ENCODE measurements at regions of chr14 and their contacts with region 1.

Region 1: DNA sequence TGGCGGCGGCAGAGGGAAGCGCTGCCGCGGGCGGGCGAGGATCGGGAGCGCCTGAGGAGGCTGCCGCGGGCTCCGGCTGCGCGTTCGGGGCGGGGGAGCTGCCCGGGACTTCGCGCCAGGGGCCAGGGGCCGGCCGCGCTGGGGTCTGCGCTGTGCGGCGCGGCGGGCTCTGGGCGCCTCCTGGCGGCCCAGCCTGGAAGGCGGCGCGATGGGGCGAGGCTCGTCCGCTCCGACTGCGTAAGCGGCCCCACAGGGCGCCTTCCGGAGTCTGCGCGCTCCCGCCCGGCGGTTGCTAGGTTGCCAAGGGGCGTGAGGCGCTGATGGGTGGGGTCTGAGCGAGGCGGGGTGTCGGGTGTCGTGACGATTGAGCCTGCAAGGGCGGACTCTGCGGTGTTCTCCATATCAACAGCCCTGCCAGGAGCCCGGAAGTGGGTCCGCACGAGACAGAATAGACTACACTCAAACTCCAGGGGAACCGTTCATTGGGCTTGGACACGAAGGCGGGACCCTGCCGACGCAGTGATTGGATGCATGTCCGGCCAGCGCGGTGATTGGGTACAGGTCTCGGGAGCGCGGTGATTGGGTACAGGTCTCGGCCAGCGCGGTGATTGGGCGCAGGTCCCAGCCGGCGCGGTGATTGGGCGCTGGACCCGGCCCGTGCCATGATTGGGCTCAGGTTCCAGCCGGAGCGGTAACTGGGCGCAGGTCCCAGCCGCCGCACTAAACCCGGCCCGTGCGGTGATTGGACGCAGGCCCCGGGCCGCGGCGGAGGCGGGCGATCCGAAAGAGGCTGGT is at the start of gene TEDC1:
- DNase-seq: peak; percentile 100
- H3K4me3 Mint-ChIP-seq: peak within 1 kb of the TSS; percentile 89
- H3K27ac Mint-ChIP-seq: peak within 1 kb of the TSS; percentile 95
- H3K4me1 Mint-ChIP-seq: peaks cover 18% of the 10 kb centered on the region
- H3K27me3 Mint-ChIP-seq: no peaks in the 10 kb centered on the region
- total RNA-seq, gene TEDC1: 41.4 and 43.3 TPM in 2 replicates

Region 2: GRCh38 chr14:105065280-105066228 is 425.2 kb before region 1 on chr14 and contains the start of gene GPR132:
- intact Hi-C with region 1: loop called (anchors 5 kb)
- DNase-seq: peak; percentile 97
- H3K4me3 Mint-ChIP-seq: peak within 1 kb of the TSS; percentile 92
- H3K27ac Mint-ChIP-seq: peak within 1 kb of the TSS; percentile 90
- H3K4me1 Mint-ChIP-seq: peaks cover 59% of the 10 kb centered on the region
- H3K27me3 Mint-ChIP-seq: no peaks in the 10 kb centered on the region
- total RNA-seq, gene GPR132: 25.8 and 31.5 TPM in 2 replicates

Region 3: DNA sequence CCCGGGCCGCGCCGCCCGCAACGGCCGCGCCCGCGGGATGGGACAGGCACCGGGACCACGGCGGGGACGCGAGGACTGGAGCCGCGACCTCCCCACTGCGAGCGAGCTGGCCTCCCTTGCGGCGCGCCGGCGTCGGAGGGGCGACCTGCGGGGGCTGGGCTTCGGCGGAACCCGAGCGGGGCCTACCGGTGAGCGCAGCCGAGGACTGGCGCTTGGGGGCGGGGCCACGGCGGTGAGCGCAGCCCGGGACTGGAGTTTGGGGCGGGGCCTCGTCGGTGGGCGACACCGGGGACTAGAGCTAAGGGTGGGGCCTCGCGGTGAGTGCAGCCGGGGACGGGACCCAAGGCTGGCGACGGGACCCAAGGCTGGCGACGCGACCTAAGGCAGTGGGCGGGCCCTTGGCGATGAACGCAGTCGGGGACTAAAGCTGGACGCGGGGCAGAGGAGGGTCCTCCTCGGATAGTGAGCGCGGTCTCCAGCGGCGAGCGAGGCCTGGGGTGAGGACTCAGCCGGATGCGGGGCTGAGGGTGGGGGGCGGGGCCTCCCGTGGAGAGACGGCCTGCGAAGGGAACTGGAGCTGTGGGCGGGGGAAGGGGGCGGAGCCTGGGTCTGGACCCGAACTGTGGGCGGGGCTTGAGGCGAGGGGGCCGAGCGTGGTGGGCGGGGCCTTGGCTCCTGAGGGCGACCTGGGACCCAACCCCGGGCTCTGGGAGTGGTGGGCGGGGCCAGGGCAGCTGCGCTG is 189.8 kb before region 1 on chr14 and contains the start of gene BRF1:
- intact Hi-C with region 1: loop called (anchors 1 kb)
- DNase-seq: peak; percentile 99
- H3K4me3 Mint-ChIP-seq: peak within 1 kb of the TSS; percentile 91
- H3K27ac Mint-ChIP-seq: peak within 1 kb of the TSS; percentile 94
- H3K4me1 Mint-ChIP-seq: peaks cover 28% of the 10 kb centered on the region
- H3K27me3 Mint-ChIP-seq: no peaks in the 10 kb centered on the region
- total RNA-seq, gene BRF1: 42.4 and 46.6 TPM in 2 replicates

Region 4: GRCh38 chr14:105398044-105398725 is 92.6 kb before region 1 on chr14 and contains the start of gene TEX22:
- intact Hi-C with region 1: loop called (anchors 1 kb)
- DNase-seq: peak; percentile 97
- H3K4me3 Mint-ChIP-seq: peak within 1 kb of the TSS; percentile 93
- H3K27ac Mint-ChIP-seq: peak within 1 kb of the TSS; percentile 96
- H3K4me1 Mint-ChIP-seq: peaks cover 20% of the 10 kb centered on the region
- H3K27me3 Mint-ChIP-seq: no peaks in the 10 kb centered on the region
- total RNA-seq, gene TEX22: 5.7 and 6.4 TPM in 2 replicates

Region 5: DNA sequence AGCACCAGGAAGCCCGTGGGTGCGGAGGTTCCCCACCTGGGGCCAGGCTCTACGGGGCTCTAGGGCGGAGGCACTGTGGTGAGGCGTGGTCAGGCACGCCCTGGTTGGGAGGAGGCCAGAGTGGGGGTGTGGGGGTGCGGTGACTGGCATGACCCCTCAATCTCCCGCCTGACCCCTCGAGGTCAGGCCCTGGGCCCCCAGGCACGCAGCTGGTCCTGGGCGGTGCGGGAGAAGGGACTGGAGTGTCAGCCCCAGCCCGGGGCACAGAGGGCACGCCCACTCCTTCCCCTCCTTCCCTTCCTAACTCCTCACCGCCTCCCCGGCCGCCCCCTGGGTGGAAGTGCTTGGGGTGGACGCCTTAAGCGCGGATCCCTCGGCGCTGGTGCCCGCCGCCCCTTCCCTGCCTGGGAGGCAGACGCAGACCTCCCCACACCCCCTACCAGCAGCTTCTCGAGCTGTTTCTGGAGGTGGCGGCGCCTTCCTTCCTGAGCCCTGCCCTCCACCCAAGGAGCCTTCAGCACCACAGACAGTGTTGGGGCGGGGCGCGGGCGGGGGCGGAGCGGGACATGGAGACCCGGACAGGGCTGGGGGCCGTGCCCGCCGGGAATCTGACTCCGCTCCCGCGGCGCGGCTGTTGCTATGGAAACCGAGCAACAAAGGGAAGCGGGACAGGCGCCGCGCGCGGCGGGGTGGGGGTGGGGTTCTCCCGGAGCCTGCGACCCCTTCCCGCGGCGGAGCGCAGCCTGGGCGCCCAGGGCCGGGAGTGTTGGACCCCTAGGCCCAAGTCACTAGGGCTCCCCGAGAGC is 16.9 kb before region 1 on chr14:
- intact Hi-C with region 1: loop called (anchors 2 kb)
- DNase-seq: peak; percentile 89
- H3K4me3 Mint-ChIP-seq: peak overlapping the region; percentile 72
- H3K27ac Mint-ChIP-seq: no peak overlapping the region
- H3K4me1 Mint-ChIP-seq: peaks cover 5% of the 10 kb centered on the region
- H3K27me3 Mint-ChIP-seq: peaks cover 11% of the 10 kb centered on the region

Region 6: DNA sequence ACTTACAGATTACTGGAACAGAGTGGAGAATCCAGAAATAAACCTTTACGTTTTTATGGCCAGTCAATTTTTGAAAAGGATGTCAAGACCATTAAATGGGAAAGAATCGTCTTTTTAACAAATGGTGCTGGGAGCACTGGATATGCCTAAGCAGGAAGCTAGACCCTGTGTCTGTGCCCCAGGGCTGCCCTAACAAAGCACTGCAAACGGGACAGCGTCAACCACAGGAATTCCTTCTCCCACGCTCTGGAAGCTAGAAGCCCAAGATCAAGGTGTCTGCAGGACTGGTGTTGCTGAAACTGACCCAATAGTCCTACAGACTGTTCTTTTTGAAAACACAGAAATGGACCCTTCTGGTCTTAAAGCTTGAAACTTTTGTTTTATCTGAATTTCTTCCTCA is 26.3 kb after region 1 on chr14:
- intact Hi-C with region 1: no loop called
- DNase-seq: no peak
- H3K4me3 Mint-ChIP-seq: no peak overlapping the region
- H3K27ac Mint-ChIP-seq: no peak overlapping the region
- H3K4me1 Mint-ChIP-seq: no peaks in the 10 kb centered on the region
- H3K27me3 Mint-ChIP-seq: peaks cover 28% of the 10 kb centered on the region

Region 7: DNA sequence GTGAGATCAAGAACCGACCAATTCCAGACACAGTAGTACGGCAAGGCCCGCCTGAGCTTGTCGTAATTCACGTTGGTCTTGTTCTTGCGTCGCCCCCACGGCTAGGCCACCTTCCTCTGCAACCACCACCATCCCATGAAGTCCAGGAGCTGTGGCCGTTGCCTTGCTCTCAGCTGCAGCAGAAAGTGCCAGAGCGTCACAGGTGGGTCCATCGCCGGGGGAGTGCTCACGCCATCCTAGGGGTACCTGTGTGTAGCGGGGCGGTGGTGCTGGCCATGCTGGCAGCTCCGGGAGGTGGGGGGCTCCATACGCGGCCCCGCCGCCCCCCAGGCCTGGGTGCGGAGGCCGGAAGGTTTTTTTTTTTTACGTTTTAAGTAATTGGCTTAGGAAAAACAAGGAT is 58.7 kb after region 1 on chr14:
- intact Hi-C with region 1: no loop called
- DNase-seq: no peak
- H3K4me3 Mint-ChIP-seq: no peak overlapping the region
- H3K27ac Mint-ChIP-seq: no peak overlapping the region
- H3K4me1 Mint-ChIP-seq: no peaks in the 10 kb centered on the region
- H3K27me3 Mint-ChIP-seq: peaks cover 14% of the 10 kb centered on the region

Region 8: GRCh38 chr14:105974902-105975301 is 484.1 kb after region 1 on chr14:
- intact Hi-C with region 1: no loop called
- DNase-seq: peak; percentile 85
- H3K4me3 Mint-ChIP-seq: no peak overlapping the region
- H3K27ac Mint-ChIP-seq: no peak overlapping the region
- H3K4me1 Mint-ChIP-seq: peaks cover 3% of the 10 kb centered on the region
- H3K27me3 Mint-ChIP-seq: peaks cover 10% of the 10 kb centered on the region

Measured in activated CD4-positive, alpha-beta T cell treated with anti-CD3 and anti-CD28 coated beads, Interleukin-2, amount 10 ng/mL, durations not matched to agents 24 days and 14 days (primary cell).